GM12878 (cell line): ENCODE measurements at regions of chr4 and their contacts with region 1.

Region 1: GRCh38 chr4:123649645-123650391 is 253.2 kb downstream of the SPRY1 start:
- DNase-seq: no peak
- ATAC-seq: peak; percentile 72
- H3K4me3 ChIP-seq: no peak overlapping the region
- H3K27ac ChIP-seq: no peak overlapping the region
- H3K4me1 ChIP-seq: no peaks in the 10 kb centered on the region; the same call in 1 of the 2 replicates
- H3K27me3 ChIP-seq: no peaks in the 10 kb centered on the region
- CTCF ChIP-seq: no peak
- EP300 ChIP-seq: no peak
- POLR2A ChIP-seq: no peak
- RAD21 ChIP-seq: no peak

Region 2: DNA sequence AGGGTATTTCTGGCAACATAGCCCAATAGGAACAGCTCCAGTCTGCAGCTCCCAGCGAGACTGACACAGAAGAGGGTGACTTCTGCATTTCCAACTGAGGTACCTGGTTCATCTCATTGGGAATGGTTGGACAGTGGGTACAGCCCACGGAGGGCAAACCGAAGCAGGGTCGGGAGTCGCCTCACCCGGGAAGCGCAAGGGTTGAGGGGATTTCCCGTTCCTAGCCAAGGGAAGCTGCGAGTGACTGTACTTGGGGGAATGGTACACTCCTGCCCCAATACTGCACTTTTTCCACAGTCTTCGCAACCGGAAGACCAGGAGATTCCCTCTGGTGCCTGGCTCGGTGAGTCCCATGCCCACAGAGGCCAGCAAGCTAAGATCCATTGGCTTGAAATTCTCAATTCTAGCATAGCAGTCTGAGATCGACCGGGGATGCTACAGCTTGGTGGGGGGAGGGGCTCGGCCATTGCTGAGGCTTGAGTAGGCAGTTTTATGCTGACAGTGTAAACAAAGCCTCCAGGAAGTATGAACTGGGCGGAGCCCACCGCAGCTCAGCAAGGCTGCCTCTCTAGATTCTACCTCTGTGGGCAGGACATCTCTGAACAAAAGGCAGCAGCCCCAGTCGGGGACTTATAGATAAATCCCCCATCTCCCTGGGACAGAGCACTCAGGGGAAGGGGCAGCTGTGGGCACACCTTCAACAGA is 1285.0 kb before region 1 on chr4:
- CTCF ChIA-PET with region 1: no interaction called
- POLR2A ChIA-PET with region 1: no interaction called
- RAD21 ChIA-PET with region 1: no interaction called
- SMC1A ChIA-PET with region 1: no interaction called
- in situ Hi-C with region 1: no loop called
- intact Hi-C with region 1: no loop called
- DNase-seq: no peak
- ATAC-seq: no peak
- H3K4me3 ChIP-seq: no peak overlapping the region
- H3K27ac ChIP-seq: no peak overlapping the region
- H3K4me1 ChIP-seq: no peaks in the 10 kb centered on the region
- H3K27me3 ChIP-seq: no peaks in the 10 kb centered on the region
- CTCF ChIP-seq: no peak
- EP300 ChIP-seq: no peak
- POLR2A ChIP-seq: no peak
- RAD21 ChIP-seq: no peak

Region 3: GRCh38 chr4:123545667-123546572 is 103.9 kb before region 1 on chr4:
- CTCF ChIA-PET with region 1: no interaction called
- POLR2A ChIA-PET with region 1: no interaction called
- RAD21 ChIA-PET with region 1: no interaction called
- SMC1A ChIA-PET with region 1: no interaction called
- in situ Hi-C with region 1: no loop called
- intact Hi-C with region 1: no loop called
- DNase-seq: no peak
- ATAC-seq: no peak
- H3K4me3 ChIP-seq: no peak overlapping the region
- H3K27ac ChIP-seq: no peak overlapping the region
- H3K4me1 ChIP-seq: no peaks in the 10 kb centered on the region
- H3K27me3 ChIP-seq: no peaks in the 10 kb centered on the region; a peak in 1 of 4 replicates
- CTCF ChIP-seq: no peak
- EP300 ChIP-seq: no peak
- POLR2A ChIP-seq: no peak
- RAD21 ChIP-seq: no peak

Region 4: GRCh38 chr4:123631786-123632692 is 17.8 kb before region 1 on chr4:
- CTCF ChIA-PET with region 1: no interaction called
- POLR2A ChIA-PET with region 1: interaction called, 11 read pairs
- RAD21 ChIA-PET with region 1: no interaction called
- SMC1A ChIA-PET with region 1: interaction called, 3 read pairs
- in situ Hi-C with region 1: no loop called
- intact Hi-C with region 1: no loop called
- DNase-seq: no peak
- ATAC-seq: peak; percentile 47
- H3K4me3 ChIP-seq: no peak overlapping the region
- H3K27ac ChIP-seq: no peak overlapping the region
- H3K4me1 ChIP-seq: no peaks in the 10 kb centered on the region
- H3K27me3 ChIP-seq: no peaks in the 10 kb centered on the region
- CTCF ChIP-seq: no peak
- EP300 ChIP-seq: no peak
- POLR2A ChIP-seq: no peak
- RAD21 ChIP-seq: no peak

Region 5: DNA sequence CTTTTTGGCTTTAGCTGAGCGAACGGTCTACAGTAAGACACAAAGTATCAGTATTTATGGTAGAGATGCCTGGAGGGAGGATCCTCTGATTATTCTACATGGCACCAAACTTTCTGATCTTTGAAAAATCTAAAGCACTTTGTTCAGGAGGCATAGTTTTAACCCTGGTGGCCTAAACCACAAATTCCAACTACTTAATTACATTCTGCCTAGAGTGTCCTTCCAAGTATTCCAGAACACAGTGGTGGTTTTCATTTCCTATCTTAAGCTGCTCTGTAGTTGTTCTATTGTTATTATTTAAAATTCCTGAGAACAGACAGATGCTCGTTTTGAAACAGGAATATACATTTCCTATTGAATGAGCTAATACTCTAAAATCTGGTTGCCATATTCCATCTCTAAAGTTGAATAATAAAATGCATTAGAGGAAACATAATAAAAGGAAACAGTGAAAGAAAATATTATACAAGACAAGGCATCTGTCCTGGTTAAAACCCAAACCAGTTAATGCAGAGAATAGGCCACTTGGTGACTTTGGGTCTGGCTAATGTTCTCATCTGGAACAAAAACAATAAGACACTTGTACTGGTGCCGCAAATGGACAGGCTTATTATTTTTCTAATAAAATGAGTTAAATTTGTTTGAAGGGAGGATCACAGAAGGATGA is 404.2 kb after region 1 on chr4:
- CTCF ChIA-PET with region 1: no interaction called
- POLR2A ChIA-PET with region 1: no interaction called
- RAD21 ChIA-PET with region 1: no interaction called
- SMC1A ChIA-PET with region 1: no interaction called
- in situ Hi-C with region 1: no loop called
- intact Hi-C with region 1: no loop called
- DNase-seq: no peak
- ATAC-seq: no peak
- H3K4me3 ChIP-seq: no peak overlapping the region
- H3K27ac ChIP-seq: no peak overlapping the region
- H3K4me1 ChIP-seq: no peaks in the 10 kb centered on the region
- H3K27me3 ChIP-seq: no peaks in the 10 kb centered on the region
- CTCF ChIP-seq: no peak
- EP300 ChIP-seq: no peak
- POLR2A ChIP-seq: no peak
- RAD21 ChIP-seq: no peak